Motor neuron (in vitro differentiated cells): ENCODE measurements at regions of chr2 and their contacts with region 1.

Region 1: DNA sequence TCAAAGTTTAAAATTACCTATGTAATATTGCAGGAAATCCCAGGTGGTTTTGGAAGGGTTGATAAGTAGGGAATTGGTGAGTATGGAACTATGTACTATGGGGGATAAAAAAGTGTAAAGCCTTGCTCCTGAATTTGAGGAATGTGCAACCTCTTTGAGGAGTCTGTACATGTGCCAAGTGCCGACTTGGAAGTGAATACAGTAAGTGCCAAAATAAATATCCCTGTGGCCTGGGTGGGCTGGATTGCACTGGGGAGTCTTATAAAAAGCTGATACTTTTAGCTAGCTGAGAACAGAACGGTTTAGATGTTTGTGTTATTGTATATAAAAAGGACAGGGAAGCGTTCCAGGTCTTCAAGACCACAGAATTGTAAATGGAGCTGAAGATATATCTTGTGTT is 317.1 kb upstream of the LRRTM1 start:
- ATAC-seq: no peak
- H3K4me3 ChIP-seq: no peak overlapping the region
- H3K27ac ChIP-seq: no peak overlapping the region
- H3K4me1 ChIP-seq: peaks cover 6 to 17% of the 10 kb centered on the region in 2 donors

Region 2: DNA sequence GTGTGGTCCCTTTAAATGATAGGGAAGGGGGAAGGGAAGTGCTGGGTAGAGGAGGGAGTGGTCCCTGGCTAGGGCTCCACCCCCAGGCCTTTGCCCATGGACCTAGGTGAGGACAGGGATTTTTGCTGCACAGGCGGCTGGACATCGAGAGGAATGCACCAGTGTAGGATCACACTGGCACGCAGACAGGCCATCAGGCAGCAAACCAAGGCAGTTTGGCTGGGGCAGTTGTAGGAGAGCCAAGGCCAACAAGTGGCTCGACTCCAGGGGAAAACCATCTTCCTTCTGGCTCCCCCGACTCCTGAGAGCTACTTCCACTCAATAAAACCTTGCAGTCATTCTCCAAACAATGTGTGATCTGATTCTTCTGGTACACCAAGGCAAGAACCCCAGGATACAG is 84.9 kb after region 1 on chr2:
- in situ Hi-C with region 1: loop called in 1 of 9 experiments (anchors 25 kb)
- ATAC-seq: no peak
- H3K4me3 ChIP-seq: no peak overlapping the region
- H3K27ac ChIP-seq: no peak overlapping the region
- H3K4me1 ChIP-seq: no peaks in the 10 kb centered on the region